PC-9 (cell line): ENCODE measurements at regions of chr4 and their contacts with region 1.

Region 1: DNA sequence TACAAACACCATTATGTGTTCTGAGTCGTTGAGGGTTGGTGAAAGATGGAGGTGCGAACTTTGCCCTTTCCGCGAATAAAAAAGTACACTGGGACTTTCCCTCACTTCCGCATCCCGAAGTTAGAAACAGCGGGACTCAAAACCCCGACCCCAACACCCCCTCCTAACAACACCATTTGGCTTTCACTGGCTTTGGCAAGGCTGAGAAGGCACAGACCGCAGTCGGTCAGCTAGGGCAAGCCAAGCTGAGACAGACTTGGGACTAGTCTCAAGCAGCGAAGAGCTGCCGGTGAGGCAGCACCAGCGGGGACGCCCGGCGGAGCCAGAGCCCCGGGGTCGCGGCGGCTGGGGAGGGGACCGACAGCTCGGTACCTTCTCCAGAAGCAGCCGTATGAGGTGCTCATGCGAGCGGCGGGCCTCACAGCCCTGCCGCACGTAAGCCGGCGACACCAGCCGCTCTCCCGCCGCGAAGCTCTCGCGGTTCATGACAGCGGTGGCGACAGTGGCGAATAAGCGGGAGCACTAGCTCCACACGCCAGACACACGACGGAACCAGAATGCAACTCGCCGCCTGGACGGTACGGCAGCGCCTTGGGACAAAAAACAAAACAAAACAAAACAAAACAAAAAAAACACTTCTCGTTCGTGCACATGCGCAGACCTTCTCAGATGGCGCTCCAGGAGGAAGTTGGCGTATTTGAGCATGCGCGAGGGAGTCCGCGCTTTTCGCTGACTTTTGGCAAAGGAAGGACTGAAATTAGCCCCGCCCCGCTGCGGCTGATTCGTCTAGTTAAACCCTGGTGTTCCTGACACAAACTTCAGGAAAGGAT is at the start of gene SEPSECS:
- DNase-seq: peak; percentile 93 to 95
- H3K4me3 ChIP-seq: peak within 1 kb of the TSS; percentile 74
- H3K27ac ChIP-seq: peak within 1 kb of the TSS; percentile 72
- H3K4me1 ChIP-seq: peaks cover 26% of the 10 kb centered on the region
- H3K27me3 ChIP-seq: no peaks in the 10 kb centered on the region
- CTCF ChIP-seq: no peak
- total RNA-seq, gene SEPSECS: 9.1 and 11.3 TPM in 2 replicates

Region 2: DNA sequence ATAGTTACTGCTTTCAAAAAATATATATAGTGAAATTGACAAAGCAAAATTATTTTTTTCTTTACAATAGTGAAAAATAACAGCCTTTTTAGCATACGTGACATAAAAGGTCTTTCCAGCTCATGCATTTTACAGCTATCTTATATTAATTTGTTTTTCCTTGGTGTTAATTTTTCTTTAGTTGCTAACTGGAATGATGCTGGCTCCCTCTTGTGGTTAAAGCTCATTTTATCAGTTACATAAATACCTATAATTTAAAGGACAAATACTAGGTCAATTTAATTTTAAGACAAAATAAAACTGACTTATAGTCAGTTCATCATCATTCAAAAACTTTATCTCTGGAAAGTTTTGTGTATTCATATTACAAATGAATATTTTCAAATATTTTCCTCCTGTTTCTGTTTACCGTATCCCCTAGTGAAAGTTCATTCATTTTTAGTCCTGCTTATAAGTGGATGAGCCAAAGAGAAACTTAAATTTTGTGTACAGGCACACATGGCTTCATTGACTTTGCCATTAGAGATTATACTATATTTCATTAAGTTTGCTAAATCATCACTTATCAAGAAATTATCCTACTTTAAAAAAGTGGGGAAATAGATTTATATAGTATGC is 207.0 kb after region 1 on chr4:
- CTCF ChIA-PET with region 1: interaction called, 5 read pairs
- POLR2A ChIA-PET with region 1: no interaction called
- intact Hi-C with region 1: loop called (anchors 5 kb)
- DNase-seq: no peak
- H3K4me3 ChIP-seq: no peak overlapping the region
- H3K27ac ChIP-seq: no peak overlapping the region
- H3K4me1 ChIP-seq: no peaks in the 10 kb centered on the region
- H3K27me3 ChIP-seq: no peaks in the 10 kb centered on the region
- CTCF ChIP-seq: peak; percentile 77

Region 3: DNA sequence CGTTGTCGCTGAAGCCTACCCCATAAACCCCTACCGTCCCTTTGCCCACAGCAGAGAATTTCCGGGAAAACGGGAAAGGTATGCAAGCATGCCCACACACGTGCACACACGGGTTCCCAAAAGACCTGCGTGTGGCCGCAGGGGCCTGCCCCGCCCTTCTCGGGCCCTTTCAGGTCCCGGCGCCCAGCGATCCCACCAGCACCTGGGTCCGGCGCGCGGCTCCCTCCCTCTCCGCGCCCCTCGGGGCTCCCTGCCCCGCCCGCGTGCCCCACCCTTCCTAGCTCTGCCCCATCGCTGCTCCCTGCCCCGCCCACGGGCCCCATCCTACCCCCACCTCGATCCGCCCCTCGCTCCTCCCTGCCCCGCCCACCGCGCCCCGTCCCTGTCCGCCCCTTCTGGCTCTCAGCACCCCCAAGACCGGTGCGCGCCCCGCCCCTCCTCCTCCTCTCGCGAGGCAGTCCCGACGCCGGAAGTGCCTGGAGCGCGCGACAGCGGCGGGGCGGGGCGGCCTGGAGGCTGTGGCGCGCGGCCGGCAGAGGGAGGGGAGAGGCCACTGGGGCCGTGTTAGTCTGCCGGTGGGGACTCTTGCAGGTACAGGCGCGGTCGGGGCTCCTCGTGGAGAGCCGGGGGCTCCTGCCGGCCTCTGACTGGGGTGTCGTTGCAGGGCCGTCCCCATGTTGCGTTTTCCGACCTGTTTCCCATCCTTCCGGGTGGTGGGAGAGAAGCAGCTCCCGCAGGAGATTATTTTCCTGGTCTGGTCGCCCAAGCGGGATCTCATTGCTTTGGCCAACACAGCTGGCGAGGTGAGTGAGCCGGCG is 216.9 kb after region 1 on chr4 and contains the start of gene ANAPC4:
- CTCF ChIA-PET with region 1: no interaction called
- POLR2A ChIA-PET with region 1: interaction called, 3 read pairs
- intact Hi-C with region 1: loop called (anchors 5 kb)
- DNase-seq: peak; percentile 77 to 95
- H3K4me3 ChIP-seq: peak within 1 kb of the TSS; percentile 92
- H3K27ac ChIP-seq: peak within 1 kb of the TSS; percentile 37; the same call in 1 of the 2 replicates
- H3K4me1 ChIP-seq: peaks cover 11% of the 10 kb centered on the region; the same call in 1 of the 2 replicates
- H3K27me3 ChIP-seq: no peaks in the 10 kb centered on the region
- CTCF ChIP-seq: no peak
- total RNA-seq, gene ANAPC4: 22.9 and 25.8 TPM in 2 replicates